Caco-2 (cell line): ENCODE measurements at regions of chr6 and their contacts with region 1.

Region 1: DNA sequence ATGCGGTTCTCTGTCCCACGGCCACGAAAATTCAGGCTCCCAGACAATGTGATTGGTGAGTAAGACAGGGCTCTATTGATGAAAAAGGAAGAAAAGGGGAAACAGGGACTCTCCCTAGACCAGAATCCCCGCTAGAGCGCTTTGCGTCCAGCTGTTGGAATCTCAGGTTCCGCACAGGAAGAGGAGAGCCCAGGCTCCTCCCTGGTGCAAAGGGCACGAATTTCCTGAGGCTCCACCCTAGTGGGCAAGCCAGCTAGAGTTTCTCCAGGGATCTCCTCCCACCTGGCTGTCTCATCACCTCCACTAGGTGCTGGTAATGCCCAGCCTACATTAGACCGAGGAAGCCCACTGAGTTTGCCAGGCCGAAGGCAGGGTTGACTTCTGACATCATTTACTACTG is 135.9 kb upstream of the SOX4 start:
- DNase-seq: peak; percentile 73 to 75
- H3K4me3 ChIP-seq: peak overlapping the region; percentile 40
- H3K4me3 Mint-ChIP-seq: peak overlapping the region; percentile 86
- H3K27ac Mint-ChIP-seq: peak overlapping the region; percentile 85
- H3K4me1 ChIP-seq: 0 out of 2 replicates have a peak, but pooled peaks cover 10% of the 10 kb centered on the region
- H3K4me1 Mint-ChIP-seq: peaks cover 8% of the 10 kb centered on the region
- H3K27me3 ChIP-seq: no peaks in the 10 kb centered on the region
- H3K27me3 Mint-ChIP-seq: no peaks in the 10 kb centered on the region
- CTCF ChIP-seq: no peak

Region 2: GRCh38 chr6:21587179-21587924 is 129.7 kb after region 1 on chr6:
- CTCF ChIA-PET with region 1: interaction called, 3 read pairs
- POLR2A ChIA-PET with region 1: no interaction called
- intact Hi-C with region 1: loop called (anchors 2 kb)
- DNase-seq: peak; percentile 62 to 63
- H3K4me3 ChIP-seq: peak overlapping the region; percentile 85
- H3K4me3 Mint-ChIP-seq: peak overlapping the region; percentile 85
- H3K27ac Mint-ChIP-seq: peak overlapping the region; percentile 63
- H3K4me1 ChIP-seq: no peaks in the 10 kb centered on the region
- H3K4me1 Mint-ChIP-seq: no peaks in the 10 kb centered on the region
- H3K27me3 ChIP-seq: no peaks in the 10 kb centered on the region
- H3K27me3 Mint-ChIP-seq: no peaks in the 10 kb centered on the region
- CTCF ChIP-seq: peak; percentile 4 to 13